ENCODE measurements at regions of chr19 and their contacts with region 1.

Region 1: GRCh38 chr19:18291590-18292461 is 10.4 kb upstream of the JUND start:
- DNase-seq: peak; percentile 95
- ATAC-seq: peak; percentile 58
- H3K4me3 ChIP-seq: peak overlapping the region; percentile 48 to 99 (median 90)
- H3K4me3 Mint-ChIP-seq: peak overlapping the region; percentile 82
- H3K27ac ChIP-seq: peak overlapping the region; percentile 100
- H3K27ac Mint-ChIP-seq: peak overlapping the region; percentile 93
- H3K4me1 ChIP-seq: peaks cover 48 to 68% of the 10 kb centered on the region in 2 donors
- H3K4me1 Mint-ChIP-seq: peaks cover 60% of the 10 kb centered on the region
- H3K27me3 ChIP-seq: no peaks in the 10 kb centered on the region
- H3K27me3 Mint-ChIP-seq: no peaks in the 10 kb centered on the region
- CTCF ChIP-seq: no peak

Region 2: DNA sequence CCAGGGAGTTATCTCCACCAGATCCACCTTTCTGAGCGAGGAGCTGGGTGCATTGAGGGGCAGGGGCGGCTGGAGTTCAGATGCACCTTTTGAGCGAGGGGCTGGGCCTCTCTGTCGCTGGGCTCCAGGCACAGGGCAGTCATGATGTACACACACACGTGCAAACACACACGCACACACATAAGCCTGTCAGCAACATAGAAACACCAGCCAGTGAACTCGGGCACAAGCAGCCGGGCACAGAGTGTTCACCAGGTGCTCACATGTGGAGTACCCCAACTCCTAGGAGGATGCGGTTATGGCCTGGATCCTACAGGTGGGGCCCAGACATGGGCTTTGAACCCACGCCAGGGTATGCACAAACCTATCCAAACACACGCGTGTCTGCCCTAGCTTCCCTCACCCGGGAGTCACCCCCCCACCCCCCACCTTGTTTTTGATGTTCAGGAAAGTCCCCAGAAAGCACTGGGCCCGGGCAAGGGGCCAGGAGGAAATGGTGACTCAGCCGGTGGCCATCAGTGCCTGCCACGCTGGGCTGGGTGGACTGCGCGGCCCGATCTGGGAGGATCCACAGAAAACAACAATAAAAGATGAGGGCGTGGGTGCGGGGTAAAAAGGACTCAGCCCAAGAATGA is 270.6 kb before region 1 on chr19:
- CTCF ChIA-PET with region 1: no interaction called
- POLR2A ChIA-PET with region 1: no interaction called
- intact Hi-C with region 1: loop called (anchors 5 kb)
- DNase-seq: peak; percentile 84
- ATAC-seq: peak; percentile 22
- H3K4me3 ChIP-seq: peak overlapping the region in 2 of 5 experiments; percentile 18 to 35
- H3K4me3 Mint-ChIP-seq: peak overlapping the region; percentile 79
- H3K27ac ChIP-seq: peak overlapping the region; percentile 95 to 99
- H3K27ac Mint-ChIP-seq: peak overlapping the region; percentile 98
- H3K4me1 ChIP-seq: peaks cover 51 to 64% of the 10 kb centered on the region in 2 donors
- H3K4me1 Mint-ChIP-seq: peaks cover 68% of the 10 kb centered on the region
- H3K27me3 ChIP-seq: no peaks in the 10 kb centered on the region
- H3K27me3 Mint-ChIP-seq: no peaks in the 10 kb centered on the region
- CTCF ChIP-seq: no peak

Region 3: GRCh38 chr19:18224525-18225354 is 67.1 kb before region 1 on chr19:
- CTCF ChIA-PET with region 1: no interaction called
- POLR2A ChIA-PET with region 1: no interaction called
- intact Hi-C with region 1: no loop called
- DNase-seq: peak; percentile 93
- ATAC-seq: peak; percentile 99
- H3K4me3 ChIP-seq: peak overlapping the region; percentile 21 to 68 (median 46)
- H3K4me3 Mint-ChIP-seq: peak overlapping the region; percentile 91
- H3K27ac ChIP-seq: no peak overlapping the region
- H3K27ac Mint-ChIP-seq: peak overlapping the region; percentile 71
- H3K4me1 ChIP-seq: peaks cover 29 to 36% of the 10 kb centered on the region in 2 donors
- H3K4me1 Mint-ChIP-seq: peaks cover 36% of the 10 kb centered on the region
- H3K27me3 ChIP-seq: peaks cover 0 to 85% (median 41%) of the 10 kb centered on the region in 4 experiments
- H3K27me3 Mint-ChIP-seq: peaks cover 53% of the 10 kb centered on the region
- CTCF ChIP-seq: no peak

Region 4: GRCh38 chr19:18274781-18275356 is 17.0 kb before region 1 on chr19:
- CTCF ChIA-PET with region 1: interaction called, 138 read pairs
- POLR2A ChIA-PET with region 1: interaction called, 318 read pairs
- intact Hi-C with region 1: loop called (anchors 2 kb)
- DNase-seq: no peak
- ATAC-seq: no peak
- H3K4me3 ChIP-seq: no peak overlapping the region
- H3K4me3 Mint-ChIP-seq: no peak overlapping the region
- H3K27ac ChIP-seq: no peak overlapping the region
- H3K27ac Mint-ChIP-seq: no peak overlapping the region
- H3K4me1 ChIP-seq: peaks cover 11 to 33% of the 10 kb centered on the region in 2 donors
- H3K4me1 Mint-ChIP-seq: peaks cover 39% of the 10 kb centered on the region
- H3K27me3 ChIP-seq: no peaks in the 10 kb centered on the region
- H3K27me3 Mint-ChIP-seq: no peaks in the 10 kb centered on the region
- CTCF ChIP-seq: no peak

Region 5: DNA sequence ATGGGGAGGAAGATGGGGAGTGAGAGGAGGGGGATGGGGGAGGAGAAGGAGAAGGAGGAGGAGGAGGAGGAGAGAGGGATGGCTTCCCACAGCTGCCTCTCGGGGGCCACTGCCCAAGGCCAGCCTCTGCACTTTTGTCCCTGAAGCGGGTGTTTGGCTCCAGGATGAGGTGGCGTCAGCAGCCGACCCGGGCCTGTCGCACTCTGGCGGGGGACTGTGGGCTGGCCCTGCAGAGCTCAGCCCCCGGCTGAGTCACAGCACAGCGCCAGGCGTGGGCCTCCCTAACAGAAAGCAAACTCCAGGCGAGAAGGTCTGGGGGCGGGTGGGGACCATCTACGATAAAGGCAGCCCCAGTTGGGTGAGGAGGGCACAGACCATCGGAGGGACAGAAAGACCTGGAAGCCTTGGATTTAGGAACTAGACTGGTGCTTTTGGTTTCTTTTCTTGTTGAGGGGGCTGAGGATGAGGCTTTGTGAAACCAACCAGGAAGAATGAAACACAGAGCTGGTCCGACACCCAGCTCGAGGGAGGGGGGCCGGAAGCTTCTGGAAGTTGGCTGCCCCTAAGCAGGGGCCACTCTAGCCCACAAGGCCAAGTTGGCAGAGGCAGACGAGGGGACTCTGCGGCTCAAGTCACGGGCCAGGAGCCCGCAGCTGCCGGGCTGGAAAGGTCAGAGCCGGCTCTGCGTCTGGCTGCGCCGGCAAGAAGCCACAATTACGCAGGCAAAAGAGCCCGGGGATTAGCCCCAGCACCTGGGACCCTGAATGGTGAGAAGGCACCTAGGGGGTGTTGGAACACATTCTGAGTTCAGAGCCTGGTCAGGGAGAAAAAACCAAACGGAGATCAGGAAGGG is 12.9 kb after region 1 on chr19:
- CTCF ChIA-PET with region 1: interaction called, 30 read pairs
- POLR2A ChIA-PET with region 1: interaction called, 213 read pairs
- intact Hi-C with region 1: loop called (anchors 1 kb)
- DNase-seq: peak; percentile 89
- ATAC-seq: peak; percentile 64
- H3K4me3 ChIP-seq: peak overlapping the region in 4 of 5 experiments; percentile 51 to 60 (median 54)
- H3K4me3 Mint-ChIP-seq: peak overlapping the region; percentile 95
- H3K27ac ChIP-seq: peak overlapping the region; percentile 98 to 99
- H3K27ac Mint-ChIP-seq: peak overlapping the region; percentile 100
- H3K4me1 ChIP-seq: peaks cover 44 to 68% of the 10 kb centered on the region in 2 donors
- H3K4me1 Mint-ChIP-seq: peaks cover 44% of the 10 kb centered on the region
- H3K27me3 ChIP-seq: no peaks in the 10 kb centered on the region
- H3K27me3 Mint-ChIP-seq: no peaks in the 10 kb centered on the region
- CTCF ChIP-seq: no peak

Region 6: DNA sequence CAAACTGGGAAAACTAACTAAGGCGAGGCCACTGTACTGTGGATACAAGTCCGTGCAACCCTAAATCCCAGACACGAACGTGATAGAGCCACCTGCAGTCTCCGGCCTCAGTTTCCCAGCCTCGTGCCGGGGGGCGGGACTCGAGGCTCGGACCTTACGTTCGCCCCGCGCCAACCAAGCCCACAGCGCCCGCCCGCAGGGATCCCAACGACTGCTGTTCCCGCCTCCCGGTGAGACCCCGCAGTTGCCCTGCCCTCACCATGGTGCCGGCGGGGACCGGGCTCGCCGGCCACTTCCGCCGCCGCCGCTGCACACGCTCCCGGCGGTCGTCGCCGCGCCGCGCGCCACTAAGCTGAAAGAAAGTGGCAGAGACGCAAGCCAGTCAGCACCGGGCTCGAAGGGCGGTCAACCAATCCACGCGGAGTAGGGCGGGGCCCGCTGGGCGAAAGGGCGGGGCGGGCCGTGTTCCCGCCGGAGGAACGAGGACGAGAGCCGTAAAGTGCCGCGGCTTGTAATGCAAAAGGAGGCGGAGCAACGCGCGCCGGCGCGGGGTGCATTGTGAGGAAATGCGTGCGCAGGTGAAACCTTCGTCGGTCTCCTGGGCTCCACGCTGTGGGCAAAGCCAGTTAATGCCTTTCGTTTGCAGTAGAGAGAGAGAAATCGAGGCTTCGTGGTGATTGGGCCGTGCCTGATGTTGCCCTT is 31.1 kb after region 1 on chr19 and contains the start of gene LSM4:
- CTCF ChIA-PET with region 1: interaction called, 11 read pairs
- POLR2A ChIA-PET with region 1: interaction called, 20 read pairs
- intact Hi-C with region 1: loop called (anchors 1 kb)
- DNase-seq: peak; percentile 100
- ATAC-seq: peak; percentile 94
- H3K4me3 ChIP-seq: peak within 1 kb of the TSS; percentile 81 to 97 (median 91)
- H3K4me3 Mint-ChIP-seq: peak within 1 kb of the TSS; percentile 87
- H3K27ac ChIP-seq: peak within 1 kb of the TSS; percentile 87 to 90
- H3K27ac Mint-ChIP-seq: peak within 1 kb of the TSS; percentile 94
- H3K4me1 ChIP-seq: peaks cover 29 to 45% of the 10 kb centered on the region in 2 donors
- H3K4me1 Mint-ChIP-seq: peaks cover 47% of the 10 kb centered on the region
- H3K27me3 ChIP-seq: no peaks in the 10 kb centered on the region
- H3K27me3 Mint-ChIP-seq: no peaks in the 10 kb centered on the region
- CTCF ChIP-seq: peak; percentile 62
- total RNA-seq, gene LSM4: 66.3 and 70.0 TPM in 2 replicates

Region 7: DNA sequence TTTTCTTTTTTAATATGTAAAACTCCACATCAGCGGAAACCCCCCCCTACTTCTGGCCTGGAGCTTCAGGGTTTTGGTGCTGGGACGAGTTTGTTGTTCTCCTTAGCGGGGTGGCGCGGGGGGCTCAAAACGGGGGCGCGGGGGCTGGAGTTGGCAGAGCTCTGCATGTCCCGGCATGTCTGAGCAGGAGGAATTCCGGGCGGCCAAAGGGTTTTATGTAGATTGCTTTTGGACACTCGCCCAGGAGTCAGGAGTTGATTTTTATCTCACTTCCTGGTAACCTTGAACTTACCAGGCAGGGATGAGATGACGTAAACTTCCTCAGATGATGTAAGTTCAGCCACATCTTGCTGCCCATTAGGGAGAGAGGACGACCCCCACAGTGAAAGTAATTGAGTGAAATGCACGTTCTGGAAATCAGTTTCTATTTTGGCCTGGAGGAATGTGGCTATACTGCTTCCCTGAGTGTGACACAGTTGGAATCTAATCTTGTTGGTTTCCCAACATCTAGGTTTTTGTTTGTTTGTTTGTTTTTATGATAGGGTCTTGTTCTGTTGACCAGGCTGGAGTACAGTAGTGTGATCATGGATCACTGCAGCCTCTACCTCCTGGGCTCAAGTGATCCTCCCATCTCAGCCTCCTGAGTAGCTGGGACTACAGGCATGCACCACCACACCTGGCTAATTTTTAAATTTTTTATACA is 73.2 kb after region 1 on chr19:
- CTCF ChIA-PET with region 1: no interaction called
- POLR2A ChIA-PET with region 1: no interaction called
- intact Hi-C with region 1: no loop called
- DNase-seq: no peak
- ATAC-seq: no peak
- H3K4me3 ChIP-seq: no peak overlapping the region
- H3K4me3 Mint-ChIP-seq: no peak overlapping the region
- H3K27ac ChIP-seq: no peak overlapping the region
- H3K27ac Mint-ChIP-seq: no peak overlapping the region
- H3K4me1 ChIP-seq: no peaks in the 10 kb centered on the region
- H3K4me1 Mint-ChIP-seq: peaks cover 4% of the 10 kb centered on the region
- H3K27me3 ChIP-seq: no peaks in the 10 kb centered on the region
- H3K27me3 Mint-ChIP-seq: no peaks in the 10 kb centered on the region
- CTCF ChIP-seq: no peak

Region 8: DNA sequence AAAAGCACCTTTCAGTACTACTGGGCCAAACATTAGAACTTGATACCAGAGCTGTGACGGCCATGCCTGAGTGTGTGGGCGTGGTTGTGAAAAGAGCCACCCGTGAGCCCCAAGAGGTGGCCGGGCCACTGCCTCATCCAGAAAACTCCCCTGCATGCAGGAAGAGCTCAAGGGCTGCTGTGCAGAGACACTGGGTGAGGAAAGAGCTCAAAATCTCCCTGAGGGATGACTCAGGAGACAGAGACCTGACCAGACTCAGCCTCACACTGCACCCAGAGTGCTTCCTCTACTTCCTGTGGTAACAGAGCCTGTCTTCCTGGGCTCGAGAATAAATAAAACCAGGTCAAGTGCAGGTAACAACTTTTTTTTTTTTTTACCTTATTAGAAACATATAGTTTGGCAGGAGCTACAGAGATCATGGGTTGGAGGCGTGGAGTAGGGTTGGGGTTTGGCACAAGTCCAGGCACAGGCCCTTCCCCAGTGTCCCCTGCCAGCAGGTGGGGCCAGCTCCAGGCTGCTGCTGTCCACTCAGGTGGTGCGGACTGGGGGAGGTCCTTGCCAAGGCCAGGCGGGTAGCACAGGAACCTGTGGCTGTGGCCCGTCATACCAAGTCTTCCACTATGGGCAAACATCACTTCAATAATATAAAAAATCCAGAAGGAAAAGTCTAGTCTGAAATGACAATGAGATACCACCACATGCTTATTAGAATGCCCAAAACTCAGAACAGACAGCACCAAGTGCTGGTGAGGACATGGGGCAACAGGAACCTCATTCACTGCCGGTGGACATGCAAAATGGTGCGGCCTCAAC is 204.5 kb after region 1 on chr19:
- CTCF ChIA-PET with region 1: no interaction called
- POLR2A ChIA-PET with region 1: no interaction called
- intact Hi-C with region 1: no loop called
- DNase-seq: no peak
- ATAC-seq: no peak
- H3K4me3 ChIP-seq: no peak overlapping the region
- H3K4me3 Mint-ChIP-seq: peak overlapping the region; percentile 23
- H3K27ac ChIP-seq: no peak overlapping the region
- H3K27ac Mint-ChIP-seq: no peak overlapping the region
- H3K4me1 ChIP-seq: peaks cover 25 to 42% of the 10 kb centered on the region in 2 donors
- H3K4me1 Mint-ChIP-seq: peaks cover 65% of the 10 kb centered on the region
- H3K27me3 ChIP-seq: no peaks in the 10 kb centered on the region
- H3K27me3 Mint-ChIP-seq: no peaks in the 10 kb centered on the region
- CTCF ChIP-seq: no peak

Region 9: GRCh38 chr19:18785179-18786128 is 493.6 kb after region 1 on chr19:
- CTCF ChIA-PET with region 1: no interaction called
- POLR2A ChIA-PET with region 1: no interaction called
- intact Hi-C with region 1: no loop called
- DNase-seq: peak; percentile 73
- ATAC-seq: peak; percentile 56
- H3K4me3 ChIP-seq: no peak overlapping the region
- H3K4me3 Mint-ChIP-seq: peak overlapping the region; percentile 57
- H3K27ac ChIP-seq: no peak overlapping the region
- H3K27ac Mint-ChIP-seq: no peak overlapping the region
- H3K4me1 ChIP-seq: peaks cover 41 to 55% of the 10 kb centered on the region in 2 donors
- H3K4me1 Mint-ChIP-seq: peaks cover 53% of the 10 kb centered on the region
- H3K27me3 ChIP-seq: peaks cover 0 to 60% (median 31%) of the 10 kb centered on the region in 4 experiments
- H3K27me3 Mint-ChIP-seq: peaks cover 44% of the 10 kb centered on the region
- CTCF ChIP-seq: no peak

Measured in B cell (primary cell).